ENCODE measurements at regions of chr6 and their contacts with region 1.

Region 1: DNA sequence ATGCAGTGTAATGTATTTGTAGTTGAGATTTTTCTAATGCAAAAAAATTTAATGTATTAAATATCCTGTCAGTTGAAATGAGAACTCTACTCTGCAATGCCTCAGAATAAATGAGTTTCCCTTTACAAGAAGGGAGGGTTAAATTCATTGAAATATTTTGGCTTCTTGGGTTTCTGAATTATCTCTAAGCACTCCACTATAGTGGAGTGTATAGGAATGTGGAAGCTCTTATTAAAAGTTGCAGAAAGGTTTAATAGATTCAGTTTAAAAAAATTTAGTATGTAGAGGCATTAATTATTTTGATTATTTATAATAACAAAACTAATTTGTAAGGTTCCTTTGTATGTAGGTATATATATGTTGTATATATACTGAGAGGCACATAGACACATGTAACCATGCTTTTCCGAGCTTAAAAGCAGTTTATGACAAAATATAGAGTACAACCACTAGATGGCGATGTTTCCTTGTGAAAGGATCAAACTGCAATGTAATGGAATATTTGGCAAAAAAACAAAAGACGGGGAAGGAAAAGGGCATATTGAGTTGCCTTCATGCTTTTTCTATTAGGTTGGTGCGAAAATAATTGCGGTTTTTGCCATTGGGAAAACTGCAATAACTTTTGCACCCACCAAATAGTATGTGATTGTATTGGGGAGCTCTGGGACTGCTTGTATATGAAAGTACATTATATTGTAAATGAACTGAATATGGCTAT is 144.2 kb downstream of the MYO6 start:
- DNase-seq: no peak
- H3K4me3 Mint-ChIP-seq: no peak overlapping the region
- H3K27ac Mint-ChIP-seq: no peak overlapping the region
- H3K4me1 Mint-ChIP-seq: peaks cover 3% of the 10 kb centered on the region
- H3K27me3 Mint-ChIP-seq: no peaks in the 10 kb centered on the region

Region 2: DNA sequence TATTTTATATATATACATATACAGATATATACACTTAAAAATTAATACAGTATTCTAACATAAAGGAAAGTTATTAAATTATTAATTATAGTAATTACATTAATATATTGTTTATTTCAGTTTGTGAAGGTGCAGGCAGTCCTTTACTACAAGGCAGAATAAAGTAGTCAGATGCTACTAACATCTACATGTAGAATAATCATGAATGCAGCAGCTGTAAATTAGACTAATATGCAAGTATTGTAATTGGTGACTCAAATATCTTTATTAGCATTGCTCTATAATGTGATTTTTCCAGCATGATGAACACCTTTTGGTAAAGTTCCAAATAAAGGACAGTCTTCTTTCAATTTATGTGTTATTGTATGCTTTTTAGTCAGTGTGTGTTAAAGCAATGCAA is 126.8 kb before region 1 on chr6:
- CTCF ChIA-PET with region 1: no interaction called
- POLR2A ChIA-PET with region 1: no interaction called
- intact Hi-C with region 1: no loop called
- DNase-seq: no peak
- H3K4me3 Mint-ChIP-seq: no peak overlapping the region
- H3K27ac Mint-ChIP-seq: no peak overlapping the region
- H3K4me1 Mint-ChIP-seq: no peaks in the 10 kb centered on the region
- H3K27me3 Mint-ChIP-seq: no peaks in the 10 kb centered on the region

Region 3: DNA sequence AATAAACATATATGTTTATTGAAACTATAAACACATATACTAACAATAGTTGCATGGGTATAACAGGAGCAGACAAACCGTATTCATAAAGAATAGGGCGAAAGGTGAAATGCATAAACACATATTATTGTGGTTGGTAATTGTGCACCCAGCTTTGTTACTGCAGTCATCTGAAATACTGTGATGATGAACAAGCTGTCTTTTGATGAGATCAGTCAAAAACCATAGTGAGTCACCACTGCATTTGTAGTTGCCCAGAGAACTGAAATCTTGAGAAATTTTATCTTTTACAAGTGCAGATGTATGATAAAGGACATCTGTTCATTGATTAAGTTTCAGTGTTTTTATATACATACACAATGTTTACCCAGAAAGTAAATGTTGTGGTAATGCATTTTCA is 10.5 kb before region 1 on chr6:
- CTCF ChIA-PET with region 1: interaction called, 74 read pairs
- POLR2A ChIA-PET with region 1: no interaction called
- intact Hi-C with region 1: no loop called
- DNase-seq: no peak
- H3K4me3 Mint-ChIP-seq: no peak overlapping the region
- H3K27ac Mint-ChIP-seq: no peak overlapping the region
- H3K4me1 Mint-ChIP-seq: no peaks in the 10 kb centered on the region
- H3K27me3 Mint-ChIP-seq: no peaks in the 10 kb centered on the region

Region 4: DNA sequence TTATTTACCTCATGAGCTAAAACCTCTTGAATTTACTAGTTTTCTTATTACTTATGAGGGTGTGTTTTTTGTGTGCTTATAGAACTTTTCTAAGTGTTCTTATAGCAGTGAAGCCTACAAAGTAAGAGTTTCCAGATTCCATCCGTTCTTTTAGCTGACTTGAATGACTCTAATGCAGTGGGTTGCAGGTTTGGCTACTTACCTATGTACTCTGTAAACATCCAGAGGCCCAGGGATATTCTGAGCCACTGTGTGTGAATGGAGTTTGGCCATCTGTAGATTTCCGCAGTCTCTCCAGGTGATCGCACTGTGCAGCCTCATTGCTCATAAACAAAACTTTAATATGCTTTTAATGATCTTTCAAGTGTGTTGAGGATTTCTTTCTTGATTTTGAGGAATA is 13.7 kb after region 1 on chr6:
- CTCF ChIA-PET with region 1: interaction called, 12 read pairs
- POLR2A ChIA-PET with region 1: no interaction called
- intact Hi-C with region 1: no loop called
- DNase-seq: no peak
- H3K4me3 Mint-ChIP-seq: no peak overlapping the region
- H3K27ac Mint-ChIP-seq: no peak overlapping the region
- H3K4me1 Mint-ChIP-seq: no peaks in the 10 kb centered on the region
- H3K27me3 Mint-ChIP-seq: no peaks in the 10 kb centered on the region

Region 5: GRCh38 chr6:75913040-75913439 is 19.8 kb after region 1 on chr6:
- CTCF ChIA-PET with region 1: interaction called, 12 read pairs
- POLR2A ChIA-PET with region 1: no interaction called
- intact Hi-C with region 1: no loop called
- DNase-seq: no peak
- H3K4me3 Mint-ChIP-seq: no peak overlapping the region
- H3K27ac Mint-ChIP-seq: no peak overlapping the region
- H3K4me1 Mint-ChIP-seq: no peaks in the 10 kb centered on the region
- H3K27me3 Mint-ChIP-seq: no peaks in the 10 kb centered on the region

Region 6: DNA sequence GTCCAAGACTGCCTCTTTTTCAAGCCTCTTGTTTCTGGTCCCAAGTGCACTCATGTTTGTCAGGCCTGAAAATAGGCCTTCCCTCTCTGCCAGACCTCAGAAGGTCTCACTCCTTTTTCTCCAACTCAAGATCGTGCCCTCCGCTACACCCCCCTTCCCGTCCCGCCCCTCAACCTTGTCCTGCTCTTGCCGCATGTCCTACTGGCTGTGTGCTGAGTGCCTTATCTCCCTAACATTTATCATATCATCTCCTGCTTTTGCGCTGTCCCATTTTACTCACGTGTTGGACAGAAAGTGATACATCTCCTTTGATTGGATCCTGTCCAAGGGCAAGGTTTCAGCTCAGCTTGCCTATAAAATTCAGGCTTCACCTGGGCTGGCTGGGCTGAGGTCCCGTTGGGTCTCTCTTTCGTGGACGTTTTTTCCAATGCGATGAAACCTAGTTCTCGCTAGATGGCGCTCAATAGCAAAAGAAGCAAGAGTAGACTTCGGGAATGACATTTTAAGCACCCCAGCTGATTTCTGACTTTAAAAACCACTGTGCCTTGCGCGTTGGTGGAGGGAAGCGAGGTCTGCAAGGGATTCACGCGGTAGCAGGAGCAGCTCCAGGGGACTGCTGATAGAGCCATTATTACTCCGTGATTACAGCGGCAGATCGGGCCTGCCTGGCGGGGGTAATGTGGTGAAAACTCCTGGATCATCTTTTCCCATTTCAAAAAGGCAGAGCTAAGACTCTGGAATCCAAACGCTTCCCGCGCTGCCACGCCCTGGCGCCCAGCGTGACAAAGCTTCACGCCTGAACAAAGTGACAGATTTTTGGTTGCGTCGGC is 41.6 kb after region 1 on chr6:
- CTCF ChIA-PET with region 1: interaction called, 23 read pairs
- POLR2A ChIA-PET with region 1: no interaction called
- intact Hi-C with region 1: no loop called
- DNase-seq: peak; percentile 40
- H3K4me3 Mint-ChIP-seq: peak overlapping the region; percentile 40
- H3K27ac Mint-ChIP-seq: no peak overlapping the region
- H3K4me1 Mint-ChIP-seq: peaks cover 8% of the 10 kb centered on the region
- H3K27me3 Mint-ChIP-seq: peaks cover 17% of the 10 kb centered on the region

Region 7: DNA sequence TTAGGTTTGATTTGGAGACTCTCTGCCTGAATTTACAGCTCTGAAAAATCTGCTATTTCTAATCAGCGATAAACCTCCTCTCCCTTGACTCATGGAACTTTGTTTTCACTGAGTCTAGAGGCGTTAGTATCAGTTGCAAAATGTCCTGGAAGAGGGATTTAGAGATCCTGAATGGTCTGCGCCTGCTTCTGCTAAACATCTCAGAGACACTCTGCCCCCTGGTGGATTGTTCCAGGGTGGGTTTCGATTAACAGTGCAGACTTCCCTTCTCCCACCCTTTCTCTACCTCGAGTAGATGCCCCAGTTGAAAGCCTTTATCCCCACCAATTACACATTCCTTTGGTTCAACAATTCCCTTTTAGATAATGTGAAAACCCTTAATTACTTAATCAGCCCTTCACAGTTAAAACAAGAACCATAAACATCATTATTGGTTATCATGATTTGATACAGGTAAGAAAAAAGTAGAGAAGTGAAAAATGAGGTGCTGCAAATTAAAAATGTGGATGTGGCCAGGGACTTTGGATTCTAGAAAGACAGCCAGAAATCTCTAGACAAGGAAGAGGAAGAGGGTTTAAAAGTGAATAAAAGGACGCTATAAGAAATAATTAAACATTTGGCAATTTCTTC is 1564.6 kb after region 1 on chr6:
- CTCF ChIA-PET with region 1: interaction called, 14 read pairs
- POLR2A ChIA-PET with region 1: no interaction called
- intact Hi-C with region 1: loop called (anchors 2 kb)
- DNase-seq: peak; percentile 50
- H3K4me3 Mint-ChIP-seq: no peak overlapping the region
- H3K27ac Mint-ChIP-seq: no peak overlapping the region
- H3K4me1 Mint-ChIP-seq: peaks cover 6% of the 10 kb centered on the region
- H3K27me3 Mint-ChIP-seq: peaks cover 23% of the 10 kb centered on the region